Activated CD4-positive, alpha-beta T cell treated with anti-CD3 and anti-CD28 coated beads, Interleukin-2, amount 10 ng/mL, durations not matched to agents 24 days and 14 days (primary cell): ENCODE measurements at regions of chr12 and their contacts with region 1.

Region 1: DNA sequence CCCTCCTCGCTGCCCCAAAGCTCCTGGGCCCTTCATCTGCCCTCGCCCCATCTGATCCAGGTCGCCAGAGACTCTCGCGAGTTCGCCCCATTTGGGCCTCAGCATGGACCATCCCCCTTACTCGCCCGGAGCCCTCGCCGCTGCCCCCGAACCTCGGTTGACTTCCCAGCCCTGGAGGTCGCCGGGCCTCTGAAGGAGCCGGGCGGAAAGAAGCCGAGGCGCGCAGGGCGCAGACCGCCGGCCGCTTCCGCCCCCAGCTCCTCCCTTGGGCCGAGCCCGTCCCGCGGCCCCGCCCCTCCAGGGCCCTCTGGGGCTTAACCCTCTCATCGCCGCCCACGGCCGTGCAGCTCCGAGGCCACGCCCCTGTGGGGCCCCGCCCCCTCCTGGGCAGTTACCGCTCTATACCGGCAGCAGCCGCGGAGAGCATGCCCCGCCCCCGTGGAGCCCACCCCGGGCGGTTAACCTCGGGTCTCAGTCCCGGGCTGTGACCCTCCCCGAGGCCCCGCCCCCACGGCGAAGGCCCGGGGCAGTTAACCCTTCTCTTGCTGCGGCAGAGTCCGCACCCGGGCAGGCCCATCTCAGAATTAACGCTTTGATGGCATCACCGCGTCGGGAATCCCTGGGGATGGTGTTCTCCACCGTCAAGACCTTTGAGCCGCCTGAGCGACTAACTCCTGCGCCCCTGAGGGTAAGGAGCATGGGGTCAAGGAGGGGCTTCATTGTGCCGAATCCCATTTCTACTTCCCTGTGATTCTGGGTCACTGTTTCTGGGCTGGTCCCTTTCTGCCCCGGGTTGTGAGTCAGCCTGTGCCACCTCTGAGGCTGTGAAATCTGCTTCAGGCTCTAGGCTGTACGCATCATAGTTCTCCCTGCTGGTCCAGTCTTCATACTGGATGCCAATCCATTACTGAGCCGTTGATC is at the start of gene SPSB2:
- DNase-seq: peak; percentile 100
- H3K4me3 Mint-ChIP-seq: peak within 1 kb of the TSS; percentile 89
- H3K27ac Mint-ChIP-seq: peak within 1 kb of the TSS; percentile 88
- H3K4me1 Mint-ChIP-seq: peaks cover 50% of the 10 kb centered on the region
- H3K27me3 Mint-ChIP-seq: no peaks in the 10 kb centered on the region
- total RNA-seq, gene SPSB2: 3.4 TPM in 2 replicates

Region 2: GRCh38 chr12:6533923-6534694 is 339.2 kb before region 1 on chr12 and contains the start of gene GAPDH:
- intact Hi-C with region 1: loop called (anchors 1 kb)
- DNase-seq: peak; percentile 97
- H3K4me3 Mint-ChIP-seq: peak within 1 kb of the TSS; percentile 92
- H3K27ac Mint-ChIP-seq: peak within 1 kb of the TSS; percentile 99
- H3K4me1 Mint-ChIP-seq: peaks cover 41% of the 10 kb centered on the region
- H3K27me3 Mint-ChIP-seq: no peaks in the 10 kb centered on the region
- total RNA-seq, gene GAPDH: 4,585 and 4,599 TPM in 2 replicates

Region 3: DNA sequence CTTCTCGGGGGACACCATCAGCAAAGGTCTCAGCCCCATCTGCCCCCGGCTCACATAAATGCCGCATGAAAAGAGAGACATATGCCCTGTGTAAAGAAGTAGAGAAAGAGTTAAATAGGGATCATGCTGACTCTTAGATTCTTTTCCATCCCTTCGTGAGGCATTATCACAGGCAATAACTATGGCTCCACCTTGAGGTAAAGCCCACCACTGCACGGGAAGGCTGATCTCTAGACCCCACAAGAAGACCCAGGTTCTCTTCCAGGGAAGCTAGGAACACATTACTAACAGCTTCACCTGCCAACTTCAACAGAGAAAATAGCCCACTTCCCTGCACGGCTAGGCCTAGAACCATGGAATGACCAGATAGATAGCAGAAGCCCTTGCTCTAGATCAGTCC is 291.2 kb before region 1 on chr12:
- intact Hi-C with region 1: no loop called
- DNase-seq: no peak
- H3K4me3 Mint-ChIP-seq: no peak overlapping the region
- H3K27ac Mint-ChIP-seq: no peak overlapping the region
- H3K4me1 Mint-ChIP-seq: no peaks in the 10 kb centered on the region
- H3K27me3 Mint-ChIP-seq: no peaks in the 10 kb centered on the region

Region 4: GRCh38 chr12:6708960-6709394 is 164.4 kb before region 1 on chr12:
- intact Hi-C with region 1: no loop called
- DNase-seq: no peak
- H3K4me3 Mint-ChIP-seq: no peak overlapping the region
- H3K27ac Mint-ChIP-seq: peak overlapping the region; percentile 59
- H3K4me1 Mint-ChIP-seq: peaks cover 5% of the 10 kb centered on the region
- H3K27me3 Mint-ChIP-seq: peaks cover 15% of the 10 kb centered on the region

Region 5: GRCh38 chr12:6752921-6753771 is 120.2 kb before region 1 on chr12 and contains the start of gene MLF2:
- intact Hi-C with region 1: loop called (anchors 2 kb)
- DNase-seq: peak; percentile 100
- H3K4me3 Mint-ChIP-seq: peak within 1 kb of the TSS; percentile 96
- H3K27ac Mint-ChIP-seq: peak within 1 kb of the TSS; percentile 98
- H3K4me1 Mint-ChIP-seq: peaks cover 26% of the 10 kb centered on the region
- H3K27me3 Mint-ChIP-seq: peaks cover 1% of the 10 kb centered on the region
- total RNA-seq, gene MLF2: 163 and 180 TPM in 2 replicates

Region 6: GRCh38 chr12:6818222-6818621 is 55.1 kb before region 1 on chr12:
- intact Hi-C with region 1: no loop called
- DNase-seq: no peak
- H3K4me3 Mint-ChIP-seq: no peak overlapping the region
- H3K27ac Mint-ChIP-seq: no peak overlapping the region
- H3K4me1 Mint-ChIP-seq: peaks cover 14% of the 10 kb centered on the region
- H3K27me3 Mint-ChIP-seq: peaks cover 12% of the 10 kb centered on the region

Region 7: GRCh38 chr12:6829536-6830220 is 43.7 kb before region 1 on chr12:
- intact Hi-C with region 1: no loop called
- DNase-seq: no peak
- H3K4me3 Mint-ChIP-seq: peak overlapping the region; percentile 92
- H3K27ac Mint-ChIP-seq: peak overlapping the region; percentile 87
- H3K4me1 Mint-ChIP-seq: peaks cover 30% of the 10 kb centered on the region
- H3K27me3 Mint-ChIP-seq: peaks cover 47% of the 10 kb centered on the region

Region 8: DNA sequence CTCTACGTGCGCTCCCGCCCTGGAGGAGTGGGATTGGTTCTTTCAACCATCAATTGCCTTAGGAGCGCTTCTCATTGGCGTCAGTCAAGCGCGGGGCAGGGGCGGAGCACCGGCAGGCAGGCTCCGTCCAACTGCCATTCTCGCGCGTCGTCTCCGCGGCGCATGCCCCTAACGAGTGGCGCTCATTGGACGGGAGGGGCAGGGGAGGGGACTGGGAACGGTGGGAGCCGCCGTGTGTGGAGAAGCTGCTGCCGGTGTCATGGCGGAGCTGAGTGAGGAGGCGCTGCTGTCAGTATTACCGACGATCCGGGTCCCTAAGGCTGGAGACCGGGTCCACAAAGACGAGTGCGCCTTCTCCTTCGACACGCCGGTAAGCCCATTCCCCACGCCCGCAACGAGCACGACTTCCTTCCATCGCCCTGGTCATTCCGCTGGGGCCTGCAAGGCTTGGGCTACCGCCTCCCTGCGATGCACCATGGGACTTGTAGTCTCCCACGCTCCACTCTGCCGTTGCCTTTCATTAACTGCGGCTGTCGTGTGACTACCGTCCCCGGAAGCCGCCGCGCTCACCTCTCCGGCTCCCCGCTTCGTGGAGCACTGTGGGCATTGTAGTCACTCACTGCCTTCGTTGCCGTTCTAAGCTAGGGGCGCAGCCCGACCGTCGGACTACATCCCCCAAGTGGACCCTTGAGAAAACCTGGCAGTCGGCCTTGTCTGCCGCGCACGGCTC is 21.3 kb before region 1 on chr12 and contains the start of gene USP5:
- intact Hi-C with region 1: loop called (anchors 1 kb)
- DNase-seq: peak; percentile 99
- H3K4me3 Mint-ChIP-seq: peak within 1 kb of the TSS; percentile 89
- H3K27ac Mint-ChIP-seq: peak within 1 kb of the TSS; percentile 97
- H3K4me1 Mint-ChIP-seq: peaks cover 38% of the 10 kb centered on the region
- H3K27me3 Mint-ChIP-seq: no peaks in the 10 kb centered on the region
- total RNA-seq, gene USP5: 121 TPM in 2 replicates

Region 9: GRCh38 chr12:6904280-6905278 is 31.2 kb after region 1 on chr12 and contains the start of gene LRRC23:
- intact Hi-C with region 1: loop called (anchors 1 kb)
- DNase-seq: peak; percentile 100
- H3K4me3 Mint-ChIP-seq: no peak within 1 kb of the TSS
- H3K27ac Mint-ChIP-seq: peak within 1 kb of the TSS; percentile 17
- H3K4me1 Mint-ChIP-seq: peaks cover 6% of the 10 kb centered on the region
- H3K27me3 Mint-ChIP-seq: peaks cover 2% of the 10 kb centered on the region
- total RNA-seq, gene LRRC23: 6.3 and 6.6 TPM in 2 replicates

Region 10: GRCh38 chr12:6937481-6938297 is 64.3 kb after region 1 on chr12:
- intact Hi-C with region 1: loop called (anchors 5 kb)
- DNase-seq: peak; percentile 98
- H3K4me3 Mint-ChIP-seq: peak overlapping the region; percentile 94
- H3K27ac Mint-ChIP-seq: peak overlapping the region; percentile 99
- H3K4me1 Mint-ChIP-seq: peaks cover 51% of the 10 kb centered on the region
- H3K27me3 Mint-ChIP-seq: no peaks in the 10 kb centered on the region

Region 11: GRCh38 chr12:7108796-7109571 is 235.6 kb after region 1 on chr12 and contains the start of gene C1RL:
- intact Hi-C with region 1: loop called (anchors 1 kb)
- DNase-seq: peak; percentile 96
- H3K4me3 Mint-ChIP-seq: peak within 1 kb of the TSS; percentile 95
- H3K27ac Mint-ChIP-seq: peak within 1 kb of the TSS; percentile 92
- H3K4me1 Mint-ChIP-seq: peaks cover 42% of the 10 kb centered on the region
- H3K27me3 Mint-ChIP-seq: no peaks in the 10 kb centered on the region
- total RNA-seq, gene C1RL: 19.8 and 23.0 TPM in 2 replicates